B cell (primary cell): ENCODE measurements at regions of chr15 and their contacts with region 1.

Region 1: DNA sequence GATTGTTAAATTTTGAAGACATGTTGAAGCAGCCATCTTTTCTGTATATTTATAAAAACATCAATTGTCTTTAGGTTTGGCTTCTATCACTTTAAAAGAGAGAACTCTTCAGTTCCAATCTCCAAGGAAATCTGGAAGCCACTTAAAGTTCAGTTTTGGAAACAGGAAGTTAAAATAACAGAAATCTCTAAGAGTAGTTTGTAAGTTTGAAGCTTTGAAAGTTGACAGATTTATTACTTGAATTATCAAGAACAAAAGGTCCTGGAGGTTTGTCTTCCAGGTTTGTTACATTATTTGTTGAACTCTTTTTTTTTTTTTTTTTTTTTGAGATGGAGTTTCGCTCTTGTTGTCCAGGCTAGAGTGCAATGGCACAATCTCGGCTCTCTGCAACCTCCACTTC is 30.0 kb downstream of the RNF111 start:
- DNase-seq: no peak
- ATAC-seq: no peak
- H3K4me3 ChIP-seq: no peak overlapping the region
- H3K4me3 Mint-ChIP-seq: no peak overlapping the region
- H3K27ac ChIP-seq: no peak overlapping the region
- H3K27ac Mint-ChIP-seq: no peak overlapping the region
- H3K4me1 ChIP-seq: peaks cover 3 to 5% of the 10 kb centered on the region in 2 donors
- H3K4me1 Mint-ChIP-seq: peaks cover 31% of the 10 kb centered on the region
- H3K27me3 ChIP-seq: no peaks in the 10 kb centered on the region
- H3K27me3 Mint-ChIP-seq: no peaks in the 10 kb centered on the region
- CTCF ChIP-seq: no peak

Region 2: GRCh38 chr15:59051873-59052861 is 34.7 kb after region 1 on chr15:
- CTCF ChIA-PET with region 1: no interaction called
- POLR2A ChIA-PET with region 1: no interaction called
- intact Hi-C with region 1: loop called (anchors 5 kb)
- DNase-seq: no peak
- ATAC-seq: no peak
- H3K4me3 ChIP-seq: no peak overlapping the region
- H3K4me3 Mint-ChIP-seq: no peak overlapping the region
- H3K27ac ChIP-seq: no peak overlapping the region
- H3K27ac Mint-ChIP-seq: no peak overlapping the region
- H3K4me1 ChIP-seq: peaks cover 0 to 4% of the 10 kb centered on the region in 2 donors
- H3K4me1 Mint-ChIP-seq: peaks cover 13% of the 10 kb centered on the region
- H3K27me3 ChIP-seq: no peaks in the 10 kb centered on the region
- H3K27me3 Mint-ChIP-seq: no peaks in the 10 kb centered on the region
- CTCF ChIP-seq: no peak

Region 3: DNA sequence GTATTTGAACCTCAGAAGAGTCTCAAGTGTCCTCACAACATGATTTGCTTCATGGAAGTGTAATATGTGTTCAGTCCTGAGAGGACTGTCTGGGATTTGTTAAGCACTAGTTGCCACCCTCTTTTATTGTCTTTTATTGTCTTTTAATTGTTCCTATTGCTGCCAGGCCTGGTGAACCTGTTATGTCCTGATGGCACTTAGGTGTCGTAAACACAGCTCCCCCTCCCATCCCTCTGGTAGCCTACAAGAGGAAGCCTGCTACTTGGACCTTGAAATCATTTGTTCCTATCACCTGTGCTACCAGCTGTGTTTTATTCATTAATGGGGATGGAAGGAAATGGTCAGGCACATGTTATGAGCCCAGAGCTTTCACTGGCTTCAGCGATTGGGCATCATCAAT is 106.8 kb after region 1 on chr15:
- CTCF ChIA-PET with region 1: no interaction called
- POLR2A ChIA-PET with region 1: no interaction called
- intact Hi-C with region 1: no loop called
- DNase-seq: no peak
- ATAC-seq: no peak
- H3K4me3 ChIP-seq: no peak overlapping the region
- H3K4me3 Mint-ChIP-seq: no peak overlapping the region
- H3K27ac ChIP-seq: no peak overlapping the region
- H3K27ac Mint-ChIP-seq: no peak overlapping the region
- H3K4me1 ChIP-seq: peaks cover 0 to 9% of the 10 kb centered on the region in 2 donors
- H3K4me1 Mint-ChIP-seq: peaks cover 22% of the 10 kb centered on the region
- H3K27me3 ChIP-seq: no peaks in the 10 kb centered on the region
- H3K27me3 Mint-ChIP-seq: no peaks in the 10 kb centered on the region
- CTCF ChIP-seq: no peak